RWPE1 (cell line): ENCODE measurements at regions of chr21 and their contacts with region 1.

Region 1: DNA sequence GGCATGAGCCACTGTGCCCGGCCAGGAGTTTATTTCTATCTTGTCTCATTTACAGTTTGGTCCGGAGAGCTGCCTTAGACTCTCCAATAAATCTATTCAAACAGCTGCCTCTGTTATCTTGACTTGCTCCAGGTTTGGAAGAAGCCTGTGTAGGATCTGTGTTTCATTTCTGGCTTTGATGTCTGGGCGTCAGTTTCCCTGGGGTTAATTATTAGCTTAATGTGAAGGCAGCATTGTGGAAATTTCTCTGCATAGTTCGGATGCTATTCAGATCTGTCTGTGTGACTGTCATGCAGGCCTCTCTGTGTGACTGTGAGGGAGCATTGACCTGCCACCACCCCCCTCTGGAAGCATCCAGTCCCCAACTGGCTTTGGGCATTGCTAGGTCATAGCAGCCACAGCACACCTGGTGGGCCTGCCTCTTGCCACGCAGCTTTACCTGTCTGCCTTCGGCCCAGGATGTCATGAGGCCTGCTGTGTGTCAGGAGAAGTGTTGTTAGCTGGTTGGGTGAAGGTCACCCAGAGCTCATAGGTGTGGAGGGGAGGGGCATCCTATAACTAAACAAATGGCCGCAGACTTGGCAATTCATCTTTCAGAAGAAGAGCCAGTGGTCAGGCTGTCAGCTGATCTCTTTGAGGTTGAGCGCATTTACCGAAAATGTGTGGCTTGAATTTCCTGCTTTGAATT is 9.8 kb downstream of the IFNGR2 start:
- DNase-seq: no peak
- H3K27ac ChIP-seq: peak overlapping the region; percentile 51
- CTCF ChIP-seq: no peak

Region 2: DNA sequence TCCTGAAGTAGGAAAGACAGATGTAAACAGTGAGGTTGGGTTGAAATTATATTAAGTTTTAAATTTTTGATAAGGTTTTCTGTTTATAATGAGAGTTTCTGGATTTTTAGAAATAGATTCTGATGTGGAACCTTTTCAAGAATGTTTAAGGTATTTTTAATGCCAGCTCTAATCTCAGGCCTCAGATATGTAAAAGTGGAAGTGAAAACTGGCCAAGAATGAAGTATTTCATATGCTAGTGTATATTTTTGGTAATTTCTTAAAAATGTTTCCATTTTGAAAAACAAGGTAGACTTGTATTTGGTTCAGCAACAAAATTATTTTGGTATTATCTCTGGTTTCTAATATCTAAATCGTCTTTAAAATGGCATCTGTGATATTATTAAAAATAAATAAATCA is 73.8 kb before region 1 on chr21:
- CTCF ChIA-PET with region 1: no interaction called
- POLR2A ChIA-PET with region 1: interaction called, 13 read pairs
- DNase-seq: no peak
- H3K27ac ChIP-seq: no peak overlapping the region
- CTCF ChIP-seq: no peak

Region 3: DNA sequence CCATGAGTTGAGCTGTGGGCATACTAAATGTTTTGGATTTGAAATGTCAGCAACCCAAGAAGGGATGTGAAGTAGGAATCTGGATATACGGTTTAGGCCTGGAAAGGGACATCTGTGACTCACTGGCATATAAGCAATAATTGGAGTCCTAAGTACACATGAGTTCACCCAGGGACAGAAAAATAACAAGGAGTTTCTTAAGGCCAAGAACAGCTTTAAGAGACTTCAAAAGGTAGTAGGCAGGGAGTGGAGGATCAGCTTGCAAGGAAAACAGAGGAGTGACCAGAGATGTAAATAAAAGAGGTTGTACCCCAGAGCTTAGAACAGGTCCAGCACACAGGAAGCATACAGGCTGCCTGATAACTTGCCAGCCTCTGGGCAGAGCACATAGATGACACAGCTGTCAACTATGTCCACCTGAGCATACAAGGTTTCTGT is 38.7 kb after region 1 on chr21:
- CTCF ChIA-PET with region 1: no interaction called
- POLR2A ChIA-PET with region 1: no interaction called
- DNase-seq: peak; percentile 5
- H3K27ac ChIP-seq: no peak overlapping the region
- CTCF ChIP-seq: no peak

Region 4: GRCh38 chr21:33687634-33688033 is 274.7 kb after region 1 on chr21:
- CTCF ChIA-PET with region 1: interaction called, 10 read pairs
- POLR2A ChIA-PET with region 1: no interaction called
- DNase-seq: no peak
- H3K27ac ChIP-seq: no peak overlapping the region
- CTCF ChIP-seq: no peak